Caco-2 (cell line): ENCODE measurements at regions of chr5 and their contacts with region 1.

Region 1: DNA sequence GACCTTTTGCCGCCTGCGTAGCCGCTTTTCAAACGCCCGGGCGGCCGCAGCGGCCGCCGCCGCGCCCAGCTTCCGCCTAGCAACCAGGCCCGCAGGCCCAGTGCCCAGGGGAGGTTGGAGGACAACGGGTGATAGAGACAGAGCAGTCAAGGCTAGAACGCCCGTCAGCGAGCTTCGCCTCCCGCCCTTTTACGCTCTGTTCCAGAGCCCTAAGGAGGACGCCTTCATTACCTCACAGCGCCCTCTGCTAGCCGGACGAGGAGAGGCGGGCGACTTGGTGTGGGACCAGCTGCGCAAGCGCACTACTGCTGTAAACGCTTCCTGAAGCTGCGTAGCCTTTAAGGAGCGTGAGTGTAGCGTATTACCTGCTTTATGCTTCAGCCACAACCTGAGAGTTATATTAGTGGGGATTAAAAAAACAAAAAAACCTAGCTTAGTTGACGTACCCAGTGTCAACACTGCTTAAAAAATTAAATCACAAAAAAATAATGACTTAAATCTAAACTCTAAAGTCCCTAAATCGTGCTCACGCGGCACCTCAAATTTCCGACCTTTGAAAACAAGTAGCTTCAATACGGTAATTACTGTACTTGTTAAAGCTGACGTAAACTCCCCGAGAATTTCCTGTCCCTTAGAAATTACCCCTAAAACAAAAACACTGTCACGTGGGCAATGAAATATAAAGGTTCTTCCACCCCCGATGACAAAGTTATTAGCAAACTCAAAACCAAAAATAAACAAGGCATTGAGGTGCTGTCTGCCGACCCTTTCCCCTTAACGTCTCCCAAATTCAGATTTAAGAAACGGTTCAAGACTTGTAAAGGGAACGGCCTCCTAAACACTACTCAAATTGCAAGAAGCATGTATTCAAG is at the start of gene CEP120:
- DNase-seq: peak; percentile 97 to 98
- H3K4me3 ChIP-seq: peak within 1 kb of the TSS; percentile 82
- H3K4me3 Mint-ChIP-seq: no peak within 1 kb of the TSS
- H3K27ac Mint-ChIP-seq: no peak within 1 kb of the TSS
- H3K4me1 ChIP-seq: peaks cover 6% of the 10 kb centered on the region
- H3K4me1 Mint-ChIP-seq: peaks cover 2% of the 10 kb centered on the region
- H3K27me3 ChIP-seq: no peaks in the 10 kb centered on the region
- H3K27me3 Mint-ChIP-seq: no peaks in the 10 kb centered on the region
- CTCF ChIP-seq: peak; percentile 63 to 92
- total RNA-seq, gene CEP120: 24.4 and 25.8 TPM in 2 replicates

Region 2: GRCh38 chr5:123265551-123265950 is 158.0 kb before region 1 on chr5:
- CTCF ChIA-PET with region 1: no interaction called
- POLR2A ChIA-PET with region 1: interaction called, 13 read pairs
- intact Hi-C with region 1: no loop called
- DNase-seq: no peak
- H3K4me3 ChIP-seq: no peak overlapping the region
- H3K4me3 Mint-ChIP-seq: no peak overlapping the region
- H3K27ac Mint-ChIP-seq: no peak overlapping the region
- H3K4me1 ChIP-seq: no peaks in the 10 kb centered on the region
- H3K4me1 Mint-ChIP-seq: no peaks in the 10 kb centered on the region
- H3K27me3 ChIP-seq: no peaks in the 10 kb centered on the region
- H3K27me3 Mint-ChIP-seq: no peaks in the 10 kb centered on the region
- CTCF ChIP-seq: no peak

Region 3: DNA sequence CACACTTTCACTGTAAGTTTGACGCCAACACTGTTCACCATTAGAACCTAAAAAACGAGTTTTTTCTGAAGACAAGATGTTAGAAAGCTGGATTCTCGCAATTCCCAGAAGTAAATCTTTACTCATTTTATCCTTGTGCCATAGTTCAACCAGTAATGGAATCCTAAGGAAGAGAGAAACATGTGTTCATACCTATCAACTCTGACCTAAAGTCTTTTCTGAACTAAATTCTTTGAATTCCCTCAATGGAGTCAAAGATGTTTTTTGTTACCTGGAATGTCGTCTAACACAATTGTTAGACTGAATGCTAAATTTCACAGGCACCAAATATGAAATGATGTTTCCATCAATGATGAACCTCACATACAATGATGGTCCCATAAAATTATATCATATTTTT is 38.5 kb before region 1 on chr5:
- CTCF ChIA-PET with region 1: interaction called, 3 read pairs
- POLR2A ChIA-PET with region 1: interaction called, 3 read pairs
- intact Hi-C with region 1: loop called (anchors 2 kb)
- DNase-seq: no peak
- H3K4me3 ChIP-seq: no peak overlapping the region
- H3K4me3 Mint-ChIP-seq: no peak overlapping the region
- H3K27ac Mint-ChIP-seq: peak overlapping the region; percentile 72
- H3K4me1 ChIP-seq: peaks cover 16% of the 10 kb centered on the region
- H3K4me1 Mint-ChIP-seq: peaks cover 13% of the 10 kb centered on the region
- H3K27me3 ChIP-seq: no peaks in the 10 kb centered on the region
- H3K27me3 Mint-ChIP-seq: no peaks in the 10 kb centered on the region
- CTCF ChIP-seq: no peak

Region 4: GRCh38 chr5:123511648-123512605 is 88.4 kb after region 1 on chr5 and contains the start of gene CSNK1G3:
- CTCF ChIA-PET with region 1: interaction called, 5 read pairs
- POLR2A ChIA-PET with region 1: interaction called, 13 read pairs
- intact Hi-C with region 1: loop called (anchors 1 kb)
- DNase-seq: peak; percentile 95 to 97
- H3K4me3 ChIP-seq: peak within 1 kb of the TSS; percentile 62
- H3K4me3 Mint-ChIP-seq: peak within 1 kb of the TSS; percentile 88
- H3K27ac Mint-ChIP-seq: peak within 1 kb of the TSS; percentile 97
- H3K4me1 ChIP-seq: peaks cover 15% of the 10 kb centered on the region; the same call in 1 of the 2 replicates
- H3K4me1 Mint-ChIP-seq: peaks cover 7% of the 10 kb centered on the region
- H3K27me3 ChIP-seq: no peaks in the 10 kb centered on the region
- H3K27me3 Mint-ChIP-seq: no peaks in the 10 kb centered on the region
- CTCF ChIP-seq: peak in 1 of 2 experiments; percentile 6
- total RNA-seq, gene CSNK1G3: 39.4 and 40.4 TPM in 2 replicates

Region 5: GRCh38 chr5:123545506-123545905 is 122.0 kb after region 1 on chr5:
- CTCF ChIA-PET with region 1: no interaction called
- POLR2A ChIA-PET with region 1: interaction called, 5 read pairs
- intact Hi-C with region 1: loop called (anchors 1 kb)
- DNase-seq: peak in 1 of 2 experiments; percentile 24
- H3K4me3 ChIP-seq: no peak overlapping the region
- H3K4me3 Mint-ChIP-seq: no peak overlapping the region
- H3K27ac Mint-ChIP-seq: no peak overlapping the region
- H3K4me1 ChIP-seq: no peaks in the 10 kb centered on the region
- H3K4me1 Mint-ChIP-seq: peaks cover 7% of the 10 kb centered on the region
- H3K27me3 ChIP-seq: no peaks in the 10 kb centered on the region
- H3K27me3 Mint-ChIP-seq: no peaks in the 10 kb centered on the region
- CTCF ChIP-seq: peak; percentile 42 to 50

Region 6: GRCh38 chr5:123610665-123611405 is 187.3 kb after region 1 on chr5:
- CTCF ChIA-PET with region 1: interaction called, 8 read pairs
- POLR2A ChIA-PET with region 1: no interaction called
- intact Hi-C with region 1: loop called (anchors 1 kb)
- DNase-seq: peak in 1 of 2 experiments; percentile 51
- H3K4me3 ChIP-seq: no peak overlapping the region
- H3K4me3 Mint-ChIP-seq: no peak overlapping the region
- H3K27ac Mint-ChIP-seq: no peak overlapping the region
- H3K4me1 ChIP-seq: no peaks in the 10 kb centered on the region
- H3K4me1 Mint-ChIP-seq: no peaks in the 10 kb centered on the region
- H3K27me3 ChIP-seq: no peaks in the 10 kb centered on the region
- H3K27me3 Mint-ChIP-seq: no peaks in the 10 kb centered on the region
- CTCF ChIP-seq: peak; percentile 77 to 85